PC-3 (cell line): ENCODE measurements at regions of chr12 and their contacts with region 1.

Region 1: DNA sequence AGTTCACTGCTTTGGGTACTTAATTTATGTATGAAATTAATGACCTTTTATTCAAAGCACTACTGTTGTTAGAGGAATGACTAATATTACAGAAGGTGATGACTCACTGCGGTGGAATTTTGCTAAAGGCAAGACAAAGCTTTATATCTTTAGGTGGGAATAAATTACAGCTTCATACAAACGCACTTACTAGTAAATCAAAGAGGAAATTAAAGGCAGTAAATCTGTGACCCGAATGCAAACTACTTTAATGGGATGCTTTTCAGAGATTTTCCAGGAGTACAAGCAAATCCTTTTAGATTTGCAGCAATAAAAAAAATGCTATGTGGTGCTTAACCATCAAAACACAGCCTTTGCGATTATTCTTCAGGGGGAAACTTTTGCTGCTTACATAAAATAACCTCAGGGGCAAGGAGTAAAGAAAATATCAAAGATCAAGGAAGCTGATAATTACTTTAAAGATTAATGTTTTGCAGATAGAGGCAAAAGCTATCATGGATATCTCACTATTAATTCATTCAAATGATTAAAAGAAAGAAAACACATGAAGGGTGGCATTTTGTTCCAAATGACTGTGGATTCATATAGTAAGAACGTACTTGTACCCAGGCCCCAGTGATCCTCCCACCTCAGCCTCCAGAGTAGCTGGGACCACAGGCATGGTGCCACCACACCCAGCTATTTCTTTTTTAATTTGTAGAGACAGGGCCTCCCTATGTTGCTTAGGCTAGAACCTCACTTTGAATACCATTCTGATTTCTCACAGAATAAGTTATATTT is 98.9 kb downstream of the DENND5B start:
- DNase-seq: peak; percentile 89
- ATAC-seq: peak; percentile 76
- H3K4me3 ChIP-seq: peak overlapping the region; percentile 23; the same call in 1 of the 2 replicates
- H3K27ac ChIP-seq: peak overlapping the region; percentile 91
- H3K4me1 ChIP-seq: peaks cover 34% of the 10 kb centered on the region
- H3K27me3 ChIP-seq: no peaks in the 10 kb centered on the region
- CTCF ChIP-seq: no peak

Region 2: DNA sequence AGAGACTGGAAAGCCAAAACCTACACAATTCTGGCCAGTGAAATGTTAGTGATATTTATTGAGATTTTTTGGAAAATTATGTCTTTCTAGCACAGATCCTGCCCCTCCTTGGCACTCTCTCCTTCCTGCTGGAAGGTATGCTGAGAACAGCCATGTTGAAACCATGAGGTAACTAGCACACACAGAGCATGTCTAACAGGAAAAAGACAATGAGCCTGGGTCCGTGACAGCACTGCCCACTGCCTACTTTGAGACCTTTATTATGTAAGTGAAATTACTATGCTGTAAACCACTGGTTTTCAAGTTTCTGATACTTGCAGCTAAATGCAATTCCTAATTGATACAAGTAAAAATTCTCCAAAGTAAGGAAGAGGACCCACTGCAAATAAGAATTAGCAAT is 84.4 kb before region 1 on chr12:
- CTCF ChIA-PET with region 1: no interaction called
- POLR2A ChIA-PET with region 1: no interaction called
- intact Hi-C with region 1: no loop called
- DNase-seq: no peak
- ATAC-seq: no peak
- H3K4me3 ChIP-seq: no peak overlapping the region
- H3K27ac ChIP-seq: no peak overlapping the region
- H3K4me1 ChIP-seq: 0 out of 2 replicates have a peak, but pooled peaks cover 4% of the 10 kb centered on the region
- H3K27me3 ChIP-seq: no peaks in the 10 kb centered on the region
- CTCF ChIP-seq: no peak

Region 3: GRCh38 chr12:31471823-31472222 is 20.2 kb before region 1 on chr12:
- CTCF ChIA-PET with region 1: no interaction called
- POLR2A ChIA-PET with region 1: interaction called, 9 read pairs
- intact Hi-C with region 1: loop called (anchors 1 kb)
- DNase-seq: peak; percentile 95
- ATAC-seq: peak; percentile 95
- H3K4me3 ChIP-seq: no peak overlapping the region
- H3K27ac ChIP-seq: peak overlapping the region; percentile 72
- H3K4me1 ChIP-seq: peaks cover 30% of the 10 kb centered on the region
- H3K27me3 ChIP-seq: no peaks in the 10 kb centered on the region
- CTCF ChIP-seq: no peak

Region 4: DNA sequence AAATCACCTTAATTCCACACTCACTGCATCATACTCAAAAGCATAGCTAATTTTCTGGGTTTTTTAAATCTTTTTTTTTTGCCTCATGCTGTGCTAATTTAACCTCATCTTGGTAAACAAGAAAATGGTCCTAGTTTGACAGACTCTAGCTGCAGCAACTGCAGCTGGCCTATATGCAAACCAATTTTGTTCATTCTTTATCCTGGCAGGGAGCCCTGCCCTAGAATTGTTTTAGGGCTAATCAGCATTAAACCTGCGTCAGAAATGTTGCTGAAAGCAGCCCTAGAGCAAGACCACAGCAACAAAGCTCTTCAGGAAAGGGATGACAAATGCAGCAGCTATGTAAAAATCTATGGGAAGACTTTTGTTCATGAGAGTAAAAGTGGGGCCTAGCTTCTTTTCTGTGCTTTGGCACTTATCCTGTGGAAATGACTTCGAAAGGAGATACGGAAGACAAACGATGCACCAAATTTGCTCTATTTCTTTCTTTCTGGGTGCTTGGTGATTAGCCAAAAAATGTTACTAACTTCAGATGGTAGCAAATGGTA is 26.7 kb after region 1 on chr12:
- CTCF ChIA-PET with region 1: no interaction called
- POLR2A ChIA-PET with region 1: no interaction called
- intact Hi-C with region 1: loop called (anchors 1 kb)
- DNase-seq: peak; percentile 95
- ATAC-seq: peak; percentile 86
- H3K4me3 ChIP-seq: no peak overlapping the region
- H3K27ac ChIP-seq: peak overlapping the region; percentile 98
- H3K4me1 ChIP-seq: peaks cover 45% of the 10 kb centered on the region
- H3K27me3 ChIP-seq: no peaks in the 10 kb centered on the region
- CTCF ChIP-seq: no peak

Region 5: GRCh38 chr12:31589904-31590641 is 98.1 kb after region 1 on chr12:
- CTCF ChIA-PET with region 1: no interaction called
- POLR2A ChIA-PET with region 1: no interaction called
- intact Hi-C with region 1: loop called (anchors 10 kb)
- DNase-seq: peak; percentile 49
- ATAC-seq: peak; percentile 57
- H3K4me3 ChIP-seq: peak overlapping the region; percentile 87
- H3K27ac ChIP-seq: peak overlapping the region; percentile 64
- H3K4me1 ChIP-seq: peaks cover 12% of the 10 kb centered on the region
- H3K27me3 ChIP-seq: no peaks in the 10 kb centered on the region
- CTCF ChIP-seq: no peak

Region 6: GRCh38 chr12:31702047-31702446 is 210.0 kb after region 1 on chr12:
- CTCF ChIA-PET with region 1: no interaction called
- POLR2A ChIA-PET with region 1: no interaction called
- intact Hi-C with region 1: no loop called
- DNase-seq: peak; percentile 28
- ATAC-seq: no peak
- H3K4me3 ChIP-seq: no peak overlapping the region
- H3K27ac ChIP-seq: no peak overlapping the region
- H3K4me1 ChIP-seq: no peaks in the 10 kb centered on the region
- H3K27me3 ChIP-seq: no peaks in the 10 kb centered on the region
- CTCF ChIP-seq: 0 out of 2 replicates have a peak, but pooled peaks have one; percentile 23